ENCODE measurements at regions of chr2 and their contacts with region 1.

Region 1: GRCh38 chr2:102240640-102241370 is 54.0 kb downstream of the IL1RL2 start:
- DNase-seq: peak; percentile 92 to 95 (median 95)
- ATAC-seq: peak; percentile 99
- H3K4me3 ChIP-seq: no peak overlapping the region
- H3K4me1 ChIP-seq: peaks cover 4% of the 10 kb centered on the region
- CTCF ChIP-seq: peak; percentile 98

Region 2: GRCh38 chr2:102084651-102085050 is 156.2 kb before region 1 on chr2:
- intact Hi-C with region 1: no loop called
- DNase-seq: no peak
- ATAC-seq: no peak
- H3K4me3 ChIP-seq: no peak overlapping the region
- H3K4me1 ChIP-seq: no peaks in the 10 kb centered on the region
- CTCF ChIP-seq: no peak

Region 3: DNA sequence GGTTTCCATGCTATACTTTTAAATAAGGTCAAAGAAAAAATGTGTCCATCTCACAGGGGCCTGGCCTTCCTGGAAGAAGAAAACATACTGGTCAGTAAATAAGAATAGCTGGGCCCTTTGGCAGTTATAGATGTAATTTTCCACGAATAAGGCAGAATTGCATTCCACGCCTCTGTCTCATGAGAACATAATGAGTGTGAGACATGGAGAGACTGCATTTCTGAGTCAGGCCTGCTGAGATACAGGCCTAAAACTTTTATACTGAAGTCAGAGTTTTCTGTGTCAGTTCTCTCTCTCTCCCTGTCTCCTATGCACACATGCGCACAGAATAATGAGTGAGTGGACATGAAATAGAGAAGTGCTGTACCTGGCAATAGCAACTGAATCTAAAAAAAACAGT is 118.7 kb before region 1 on chr2:
- intact Hi-C with region 1: no loop called
- DNase-seq: no peak
- ATAC-seq: no peak
- H3K4me3 ChIP-seq: no peak overlapping the region
- H3K4me1 ChIP-seq: peaks cover 25% of the 10 kb centered on the region
- CTCF ChIP-seq: no peak

Region 4: DNA sequence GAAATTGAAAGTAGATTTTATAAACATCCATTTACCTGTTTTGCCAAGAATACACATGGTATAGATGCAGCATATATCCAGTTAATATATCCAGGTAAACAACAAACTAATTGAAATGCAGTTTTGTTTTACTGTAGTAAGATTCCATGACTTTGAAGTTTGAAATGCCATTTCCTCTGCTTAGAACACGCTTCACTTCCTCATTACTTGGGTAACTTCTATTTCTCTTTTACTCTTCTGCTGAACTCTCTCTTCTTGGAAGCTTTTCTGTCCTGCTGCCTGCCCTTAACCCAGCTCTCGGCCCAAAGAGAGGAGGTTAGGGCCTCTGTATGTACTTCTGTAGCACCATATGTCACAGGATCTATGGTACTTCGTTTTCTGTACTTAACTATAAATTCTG is 68.1 kb before region 1 on chr2:
- intact Hi-C with region 1: loop called in 1 of 2 experiments (anchors 10 kb)
- DNase-seq: no peak
- ATAC-seq: no peak
- H3K4me3 ChIP-seq: no peak overlapping the region
- H3K4me1 ChIP-seq: no peaks in the 10 kb centered on the region
- CTCF ChIP-seq: no peak

Region 5: GRCh38 chr2:102187496-102188150 is 53.2 kb before region 1 on chr2:
- intact Hi-C with region 1: loop called in 1 of 2 experiments (anchors 10 kb)
- DNase-seq: peak; percentile 60 to 73 (median 72)
- ATAC-seq: peak; percentile 78
- H3K4me3 ChIP-seq: peak overlapping the region; percentile 9
- H3K4me1 ChIP-seq: peaks cover 6% of the 10 kb centered on the region
- CTCF ChIP-seq: no peak